IMR-90 (cell line): ENCODE measurements at regions of chr13 and their contacts with region 1.

Region 1: GRCh38 chr13:94549232-94550061 is 46.5 kb downstream of the TGDS start:
- DNase-seq: peak; percentile 96
- ATAC-seq: peak; percentile 95
- H3K4me3 ChIP-seq: peak overlapping the region; percentile 55
- H3K27ac ChIP-seq: peak overlapping the region; percentile 69
- H3K4me1 ChIP-seq: no peaks in the 10 kb centered on the region
- H3K27me3 ChIP-seq: no peaks in the 10 kb centered on the region
- CTCF ChIP-seq: no peak; the same call in 1 of the 2 replicates
- POLR2A ChIP-seq: peak; percentile 17; the same call in 1 of the 2 replicates
- RAD21 ChIP-seq: no peak

Region 2: GRCh38 chr13:94435604-94436226 is 113.7 kb before region 1 on chr13:
- CTCF ChIA-PET with region 1: no interaction called
- POLR2A ChIA-PET with region 1: no interaction called
- dilution Hi-C with region 1: no loop called
- in situ Hi-C with region 1: no loop called
- intact Hi-C with region 1: loop called (anchors 5 kb)
- DNase-seq: peak; percentile 58
- ATAC-seq: peak; percentile 91
- H3K4me3 ChIP-seq: no peak overlapping the region
- H3K27ac ChIP-seq: no peak overlapping the region
- H3K4me1 ChIP-seq: no peaks in the 10 kb centered on the region
- H3K27me3 ChIP-seq: peaks cover 6% of the 10 kb centered on the region
- CTCF ChIP-seq: peak; percentile 63
- POLR2A ChIP-seq: no peak
- RAD21 ChIP-seq: peak; percentile 65

Region 3: DNA sequence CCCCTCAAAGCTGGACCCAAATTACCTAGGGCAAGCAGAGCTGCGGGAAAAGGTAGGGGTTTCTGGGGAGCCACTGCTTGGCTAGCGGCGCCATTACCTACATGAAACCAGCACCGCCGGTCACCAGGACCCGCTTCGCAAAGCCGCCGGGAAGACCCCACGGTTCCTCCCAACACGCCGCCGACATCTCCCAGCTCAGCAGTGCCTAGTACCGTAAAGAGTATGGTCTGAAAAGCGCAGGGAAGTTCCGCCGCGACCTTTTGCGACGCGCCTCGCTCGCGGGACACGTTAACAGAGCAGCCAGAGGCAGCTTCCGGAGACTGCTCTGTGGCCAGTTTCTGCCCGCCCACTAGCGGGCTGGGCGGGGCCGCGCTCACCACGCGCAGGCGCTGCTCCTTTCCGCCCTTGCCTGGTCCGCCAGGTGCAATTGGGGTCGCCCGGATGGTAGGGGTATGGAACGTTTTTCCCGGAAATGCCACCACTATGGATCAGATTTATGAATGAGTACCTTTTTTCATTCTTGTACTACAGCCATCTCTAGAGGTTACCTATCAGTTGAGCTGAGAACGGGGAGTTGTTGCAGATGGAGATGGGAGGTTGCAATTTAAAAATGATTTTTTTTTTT is 46.6 kb after region 1 on chr13 and contains the start of gene TGDS:
- CTCF ChIA-PET with region 1: no interaction called
- POLR2A ChIA-PET with region 1: no interaction called
- dilution Hi-C with region 1: no loop called
- in situ Hi-C with region 1: no loop called
- intact Hi-C with region 1: loop called (anchors 1 kb)
- DNase-seq: peak; percentile 91
- ATAC-seq: peak; percentile 97
- H3K4me3 ChIP-seq: peak within 1 kb of the TSS; percentile 63
- H3K27ac ChIP-seq: peak within 1 kb of the TSS; percentile 70
- H3K4me1 ChIP-seq: peaks cover 9% of the 10 kb centered on the region
- H3K27me3 ChIP-seq: no peaks in the 10 kb centered on the region
- CTCF ChIP-seq: no peak
- POLR2A ChIP-seq: peak; percentile 75; the same call in 1 of the 2 replicates
- RAD21 ChIP-seq: no peak
- total RNA-seq, gene TGDS: 15.6 and 17.8 TPM in 2 replicates

Region 4: DNA sequence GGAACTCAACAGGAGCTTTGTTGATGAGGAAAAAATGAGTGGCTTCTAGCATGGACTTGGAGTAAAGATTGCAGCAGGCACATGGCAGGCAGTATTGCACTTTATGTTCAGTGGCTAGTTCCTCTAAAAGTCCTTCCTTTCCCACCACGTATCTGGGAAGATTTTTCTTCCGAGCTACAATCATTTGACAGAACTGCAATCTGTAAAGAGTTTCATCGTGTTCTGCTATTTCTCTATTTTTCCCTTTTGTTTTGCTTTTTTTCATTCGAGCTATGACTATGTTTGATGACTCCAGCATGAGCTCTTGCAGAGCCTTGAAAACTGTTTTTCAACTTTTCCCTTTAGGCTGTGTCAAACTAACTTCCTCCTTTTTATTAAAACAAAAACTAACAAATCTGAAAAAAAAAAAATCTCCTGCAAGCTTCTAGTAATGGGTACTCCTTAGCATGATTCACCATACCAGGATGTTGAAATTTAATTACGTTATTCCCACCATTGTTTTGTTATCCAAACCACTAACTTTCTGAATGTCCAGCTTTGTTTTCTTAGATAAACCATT is 1015.4 kb after region 1 on chr13:
- CTCF ChIA-PET with region 1: no interaction called
- POLR2A ChIA-PET with region 1: no interaction called
- dilution Hi-C with region 1: no loop called
- in situ Hi-C with region 1: no loop called
- intact Hi-C with region 1: no loop called
- DNase-seq: peak; percentile 34
- ATAC-seq: peak; percentile 40
- H3K4me3 ChIP-seq: no peak overlapping the region
- H3K27ac ChIP-seq: no peak overlapping the region
- H3K4me1 ChIP-seq: peaks cover 3% of the 10 kb centered on the region; the same call in 1 of the 2 replicates
- H3K27me3 ChIP-seq: peaks cover 8% of the 10 kb centered on the region; the same call in 1 of the 2 replicates
- CTCF ChIP-seq: no peak
- POLR2A ChIP-seq: no peak
- RAD21 ChIP-seq: no peak